ENCODE measurements at regions of chr11 and their contacts with region 1.

Region 1: GRCh38 chr11:60831143-60831500 is 10.8 kb upstream of the CCDC86 start:
- DNase-seq: peak; percentile 79 to 89 (median 83)
- H3K4me3 ChIP-seq: peak overlapping the region in 1 of 7 experiments; percentile 25
- H3K27ac ChIP-seq: no peak overlapping the region
- H3K4me1 ChIP-seq: no peaks in the 10 kb centered on the region
- H3K27me3 ChIP-seq: peaks cover 0 to 4% (median 0%) of the 10 kb centered on the region in 5 experiments

Region 2: DNA sequence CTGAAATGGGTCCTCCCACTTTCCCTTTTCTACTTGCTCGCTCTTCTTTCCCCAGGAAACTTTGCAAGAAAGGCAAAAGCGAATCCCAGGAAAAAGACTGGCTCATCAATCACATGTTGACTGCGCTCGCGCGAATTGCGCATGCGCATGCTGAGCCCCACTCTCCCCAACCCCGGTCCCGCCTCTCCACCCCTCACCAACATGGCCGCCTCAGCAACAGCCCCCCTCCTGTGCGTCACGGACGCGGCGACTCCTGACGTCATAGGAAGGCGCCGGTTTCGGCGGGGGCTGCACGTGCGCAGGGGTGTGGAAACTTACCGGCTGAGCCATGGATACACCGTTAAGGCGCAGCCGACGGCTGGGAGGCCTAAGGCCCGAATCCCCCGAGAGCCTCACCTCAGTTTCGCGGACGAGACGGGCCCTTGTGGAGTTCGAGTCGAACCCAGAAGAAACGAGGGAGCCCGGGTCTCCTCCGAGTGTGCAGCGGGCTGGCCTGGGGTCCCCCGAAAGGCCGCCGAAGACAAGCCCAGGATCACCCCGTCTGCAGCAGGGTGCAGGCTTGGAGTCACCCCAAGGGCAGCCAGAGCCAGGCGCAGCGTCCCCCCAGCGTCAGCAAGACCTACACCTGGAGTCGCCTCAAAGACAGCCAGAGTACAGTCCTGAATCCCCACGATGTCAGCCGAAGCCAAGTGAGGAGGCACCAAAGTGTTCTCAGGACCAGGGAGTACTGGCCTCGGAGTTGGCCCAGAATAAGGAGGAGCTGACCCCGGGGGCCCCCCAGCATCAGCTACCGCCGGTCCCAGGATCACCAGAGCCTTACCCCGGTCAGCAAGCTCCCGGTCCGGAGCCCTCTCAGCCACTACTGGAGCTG is 10.9 kb after region 1 on chr11 and contains the start of gene CCDC86:
- CTCF ChIA-PET with region 1: interaction called, 17 read pairs
- POLR2A ChIA-PET with region 1: no interaction called
- DNase-seq: peak; percentile 96 to 97 (median 96)
- H3K4me3 ChIP-seq: peak within 1 kb of the TSS; percentile 73 to 97 (median 87)
- H3K27ac ChIP-seq: peak within 1 kb of the TSS; percentile 44 to 74
- H3K4me1 ChIP-seq: peaks cover 15 to 41% (median 31%) of the 10 kb centered on the region in 4 experiments
- H3K27me3 ChIP-seq: no peaks in the 10 kb centered on the region

Region 3: DNA sequence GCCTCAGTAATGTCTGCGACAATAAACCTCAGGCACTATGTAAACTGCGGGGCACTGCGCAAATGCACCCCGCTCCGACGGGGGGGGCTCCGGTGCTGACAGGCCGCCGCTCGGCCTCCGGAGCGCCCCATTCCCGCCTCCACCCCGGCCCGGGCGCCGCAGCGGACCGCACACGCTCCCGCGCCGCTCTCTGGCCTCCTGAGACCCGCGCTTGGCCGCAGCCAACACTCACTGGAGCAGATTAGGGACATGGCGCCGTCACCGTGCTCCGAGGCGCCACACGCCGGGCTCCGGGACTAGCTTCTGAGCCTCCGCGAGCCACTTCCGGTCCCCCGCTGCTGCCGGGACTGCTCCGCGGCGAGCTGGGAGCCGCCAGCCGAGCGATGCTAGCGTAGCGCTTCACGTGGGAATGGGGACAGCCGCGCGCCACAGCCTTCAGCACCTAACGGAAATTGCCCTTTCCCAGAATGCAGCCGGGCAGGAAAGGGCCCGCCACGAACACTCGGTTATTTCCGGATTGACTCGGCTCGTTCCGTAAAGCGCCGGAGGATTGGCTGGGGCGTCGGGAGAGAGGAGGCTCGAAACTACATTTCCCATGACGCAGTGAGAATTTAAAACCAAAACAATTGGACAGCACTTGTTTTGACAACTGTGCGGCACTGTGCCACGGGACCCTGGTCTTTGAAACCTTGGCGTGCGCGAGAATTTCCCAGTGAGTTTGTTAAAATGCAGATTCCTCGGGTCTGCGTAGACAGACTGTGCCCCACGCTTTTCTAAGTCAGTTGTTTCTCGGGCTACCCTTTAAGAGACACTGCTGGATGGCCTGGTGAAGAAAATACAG is 75.2 kb after region 1 on chr11 and contains the start of gene PRPF19:
- CTCF ChIA-PET with region 1: interaction called, 138 read pairs
- POLR2A ChIA-PET with region 1: interaction called, 3 read pairs
- DNase-seq: peak; percentile 96 to 99 (median 98)
- H3K4me3 ChIP-seq: peak within 1 kb of the TSS; percentile 75 to 92 (median 86)
- H3K27ac ChIP-seq: peak within 1 kb of the TSS; percentile 78 to 89
- H3K4me1 ChIP-seq: peaks cover 13 to 35% (median 28%) of the 10 kb centered on the region in 4 experiments
- H3K27me3 ChIP-seq: no peaks in the 10 kb centered on the region

Region 4: GRCh38 chr11:61446211-61446651 is 615.1 kb after region 1 on chr11:
- CTCF ChIA-PET with region 1: no interaction called
- POLR2A ChIA-PET with region 1: no interaction called
- DNase-seq: peak; percentile 85 to 92 (median 88)
- H3K4me3 ChIP-seq: no peak overlapping the region
- H3K27ac ChIP-seq: no peak overlapping the region
- H3K4me1 ChIP-seq: peaks cover 0 to 4% (median 2%) of the 10 kb centered on the region in 4 experiments
- H3K27me3 ChIP-seq: no peaks in the 10 kb centered on the region

Measured in common myeloid progenitor, CD34-positive (primary cell).